ENCODE measurements at regions of chr14 and their contacts with region 1.

Region 1: DNA sequence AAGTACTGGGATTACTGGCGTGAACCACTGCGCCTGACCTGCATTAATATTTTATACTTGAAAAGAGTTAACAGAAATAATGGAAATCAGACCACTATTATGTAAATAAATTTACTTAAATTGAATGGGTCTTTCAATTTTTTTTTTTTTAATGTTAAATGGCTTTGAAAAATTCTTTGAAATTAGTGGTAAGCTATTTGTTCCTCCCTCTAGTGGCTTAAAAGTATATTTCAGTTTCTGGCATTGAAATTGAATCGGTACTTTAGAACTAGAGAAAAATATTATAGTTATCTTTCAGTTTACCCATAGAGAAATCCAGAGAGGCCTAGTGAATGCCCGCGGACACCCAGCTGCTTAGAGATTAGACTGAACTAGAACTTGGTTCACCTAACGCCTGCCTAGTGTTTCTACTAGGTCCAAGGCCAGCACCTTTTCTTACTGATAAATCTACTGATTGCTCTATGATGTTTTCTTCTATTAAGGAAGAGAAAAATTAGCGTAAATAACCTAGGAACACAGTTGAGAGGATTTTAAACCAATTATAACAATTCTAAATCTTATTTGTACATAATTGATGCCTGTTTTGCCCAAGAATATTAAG is 106.5 kb downstream of the EML1 start:
- DNase-seq: peak in 1 of 2 experiments; percentile 15
- ATAC-seq: peak in 1 of 2 experiments; percentile 49; a peak in 2 of 6 replicates
- H3K4me3 ChIP-seq: no peak overlapping the region
- H3K27ac ChIP-seq: no peak overlapping the region
- H3K4me1 ChIP-seq: no peaks in the 10 kb centered on the region
- CTCF ChIP-seq: peak; percentile 50
- EP300 ChIP-seq: no peak
- POLR2A ChIP-seq: no peak
- RAD21 ChIP-seq: peak; percentile 23 to 28; a peak in 2 of 5 replicates

Region 2: DNA sequence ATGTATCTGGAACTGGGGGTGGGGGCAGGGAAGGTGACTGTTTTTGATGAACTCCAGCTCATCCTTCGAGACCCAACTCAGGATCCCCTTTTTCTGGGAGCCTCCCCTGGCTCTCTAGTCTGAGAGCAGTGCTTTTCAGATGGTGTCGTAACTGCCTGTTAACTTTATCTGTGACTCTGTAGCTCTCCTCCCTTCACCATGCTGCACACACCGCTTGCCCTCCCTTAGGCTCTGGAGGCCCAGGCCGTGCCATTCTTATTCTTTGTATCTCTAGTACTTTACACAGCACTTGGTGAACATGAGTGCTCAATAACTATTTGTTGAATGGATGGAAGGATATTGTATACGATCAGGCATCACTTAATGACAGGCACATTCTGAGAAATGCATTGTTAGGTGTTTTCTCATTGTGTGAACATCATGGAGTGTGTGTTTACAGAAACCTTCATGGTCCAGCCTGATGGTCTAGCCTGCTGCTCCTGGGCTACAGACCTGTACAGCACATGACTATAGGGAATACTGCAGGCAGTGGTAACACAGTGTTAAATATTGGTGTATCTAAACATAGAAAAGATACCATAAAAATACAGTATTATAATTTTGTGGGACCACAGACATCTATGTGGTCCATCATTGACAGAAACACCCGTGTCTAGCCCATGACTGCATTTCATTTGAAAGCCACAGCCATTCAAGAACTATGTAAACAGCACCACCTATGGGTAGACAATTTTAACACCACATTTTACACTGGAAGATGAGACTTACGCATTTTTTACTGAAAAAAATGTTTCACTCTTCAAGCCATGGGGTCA is 14.6 kb before region 1 on chr14:
- CTCF ChIA-PET with region 1: interaction called, 32 read pairs
- POLR2A ChIA-PET with region 1: no interaction called
- DNase-seq: peak; percentile 69 to 71
- ATAC-seq: peak; percentile 75 to 92; a peak in 4 of 6 replicates
- H3K4me3 ChIP-seq: no peak overlapping the region
- H3K27ac ChIP-seq: no peak overlapping the region
- H3K4me1 ChIP-seq: no peaks in the 10 kb centered on the region
- CTCF ChIP-seq: peak; percentile 95
- EP300 ChIP-seq: no peak
- POLR2A ChIP-seq: no peak
- RAD21 ChIP-seq: peak; percentile 91 to 94

Region 3: DNA sequence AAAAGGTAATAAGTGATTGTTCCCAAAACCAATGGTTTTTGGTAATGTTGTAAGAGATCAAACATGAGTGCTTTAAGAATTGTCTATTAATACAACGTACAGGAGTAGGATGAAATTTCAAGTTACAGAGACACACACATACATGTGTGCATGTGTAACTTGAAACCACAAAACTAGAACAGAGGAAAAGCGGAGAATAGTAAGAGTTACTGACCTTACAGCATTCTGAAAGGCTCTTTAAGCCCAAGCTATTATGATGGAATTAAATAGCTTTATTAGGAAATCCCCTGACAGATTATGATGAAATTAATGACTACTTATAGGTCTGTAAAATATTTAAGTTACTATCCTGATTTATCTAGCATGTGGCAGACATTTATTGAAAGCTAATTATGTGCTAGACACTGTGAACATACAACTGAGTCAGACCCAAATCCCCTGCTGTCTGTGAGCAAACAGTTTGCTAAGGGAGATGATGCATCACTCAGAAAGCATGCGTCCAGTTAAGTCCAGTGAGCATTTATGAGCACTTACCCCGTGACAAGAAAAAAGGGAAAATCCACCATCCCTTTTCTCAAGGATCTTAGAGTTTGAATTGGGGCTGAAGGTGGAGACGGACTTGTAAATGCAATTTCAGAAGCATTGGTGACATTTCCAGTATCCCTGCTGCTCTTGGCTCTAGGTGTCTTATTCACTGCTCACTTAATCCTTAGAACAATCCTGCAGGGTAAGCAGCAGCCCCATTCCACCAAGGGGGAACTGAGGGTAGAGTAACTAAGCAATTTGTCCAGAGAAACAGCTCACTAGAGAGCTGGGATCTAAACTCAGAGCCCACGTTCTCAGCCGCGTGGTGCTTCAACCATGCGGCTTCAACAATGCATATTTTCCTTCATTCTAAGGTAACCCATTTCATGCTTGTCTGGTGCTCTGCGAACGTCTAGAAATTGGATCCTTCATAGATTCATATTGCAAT is 10.9 kb after region 1 on chr14:
- CTCF ChIA-PET with region 1: interaction called, 19 read pairs
- POLR2A ChIA-PET with region 1: no interaction called
- DNase-seq: peak; percentile 69 to 79
- ATAC-seq: peak; percentile 93 to 96
- H3K4me3 ChIP-seq: no peak overlapping the region
- H3K27ac ChIP-seq: peak overlapping the region; percentile 51 to 82
- H3K4me1 ChIP-seq: peaks cover 34% of the 10 kb centered on the region
- CTCF ChIP-seq: no peak
- EP300 ChIP-seq: 0 out of 5 replicates have a peak, but pooled peaks of 1 of the 2 experiments have one; percentile 34
- POLR2A ChIP-seq: no peak
- RAD21 ChIP-seq: peak in 1 of 2 experiments; percentile 2; a peak in 1 of 5 replicates

Region 4: DNA sequence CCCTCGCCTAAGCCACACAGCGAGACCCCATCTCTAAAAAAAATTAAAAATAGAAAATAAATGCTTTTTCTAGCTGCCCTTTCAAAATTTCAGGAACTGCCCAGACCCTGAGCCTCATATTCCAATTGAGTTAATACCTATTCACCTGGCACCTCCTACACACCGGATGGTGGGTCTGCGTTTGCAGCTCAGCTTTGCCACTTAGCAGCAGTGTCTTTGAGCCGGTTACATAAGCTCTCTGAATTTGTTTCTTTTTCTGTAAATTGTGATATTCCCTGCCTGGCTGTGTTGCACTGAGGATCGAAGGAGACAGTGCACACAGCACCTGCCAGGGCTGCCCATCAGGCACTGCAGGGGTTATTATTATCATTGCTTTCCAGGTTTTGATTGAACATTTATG is 19.1 kb after region 1 on chr14:
- CTCF ChIA-PET with region 1: interaction called, 15 read pairs
- POLR2A ChIA-PET with region 1: no interaction called
- DNase-seq: no peak
- ATAC-seq: no peak
- H3K4me3 ChIP-seq: no peak overlapping the region
- H3K27ac ChIP-seq: no peak overlapping the region
- H3K4me1 ChIP-seq: no peaks in the 10 kb centered on the region
- CTCF ChIP-seq: no peak
- EP300 ChIP-seq: no peak
- POLR2A ChIP-seq: no peak
- RAD21 ChIP-seq: no peak